Tibial artery (tissue), 4 donors: ENCODE measurements at regions of chr5 and their contacts with region 1.

Region 1: DNA sequence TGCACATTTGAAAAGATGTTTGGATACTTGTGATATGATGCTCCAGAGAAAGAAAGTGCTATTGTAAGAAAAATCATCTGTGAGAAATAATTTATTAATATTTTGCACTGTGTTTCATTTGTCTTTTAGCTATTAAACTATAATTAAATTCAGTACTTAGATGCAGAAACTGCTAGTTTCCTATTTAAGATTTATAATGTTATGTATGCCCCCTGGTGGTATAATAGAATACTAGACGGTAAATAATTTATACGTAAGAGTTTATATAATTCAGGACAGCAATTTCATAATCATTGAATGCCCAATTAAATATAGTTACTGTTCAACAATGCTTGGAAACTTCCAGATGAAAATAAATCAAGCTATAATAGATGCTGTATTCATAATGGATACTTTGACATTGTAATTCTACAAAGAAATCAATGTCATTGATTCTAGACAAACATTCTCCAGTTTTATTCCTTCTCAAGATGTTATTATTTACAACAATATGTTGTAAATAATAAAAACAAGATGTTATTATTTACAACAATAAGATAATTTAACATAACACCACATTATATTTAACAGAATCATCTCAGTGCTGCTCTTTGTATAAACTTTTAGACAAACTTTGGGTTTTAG is 101.0 kb downstream of the TMEM232 start:
- DNase-seq: no peak
- H3K4me3 ChIP-seq: no peak overlapping the region
- H3K27ac ChIP-seq: no peak overlapping the region
- H3K4me1 ChIP-seq: peaks cover 0 to 4% (median 0%) of the 10 kb centered on the region in 4 donors
- H3K27me3 ChIP-seq: no peaks in the 10 kb centered on the region
- CTCF ChIP-seq: peak; percentile 45 to 54

Region 2: GRCh38 chr5:109703829-109704228 is 921.7 kb before region 1 on chr5:
- intact Hi-C with region 1: loop called (anchors 10 kb)
- DNase-seq: no peak
- H3K4me3 ChIP-seq: no peak overlapping the region
- H3K27ac ChIP-seq: peak overlapping the region; percentile 23 to 68
- H3K4me1 ChIP-seq: peaks cover 0 to 51% (median 22%) of the 10 kb centered on the region in 4 donors
- H3K27me3 ChIP-seq: no peaks in the 10 kb centered on the region
- CTCF ChIP-seq: no peak

Region 3: GRCh38 chr5:110463106-110463505 is 162.4 kb before region 1 on chr5:
- intact Hi-C with region 1: no loop called
- DNase-seq: no peak
- H3K4me3 ChIP-seq: no peak overlapping the region
- H3K27ac ChIP-seq: no peak overlapping the region
- H3K4me1 ChIP-seq: no peaks in the 10 kb centered on the region
- H3K27me3 ChIP-seq: no peaks in the 10 kb centered on the region
- CTCF ChIP-seq: no peak

Region 4: GRCh38 chr5:110681109-110681508 is 55.6 kb after region 1 on chr5:
- intact Hi-C with region 1: no loop called
- DNase-seq: no peak
- H3K4me3 ChIP-seq: no peak overlapping the region
- H3K27ac ChIP-seq: no peak overlapping the region
- H3K4me1 ChIP-seq: no peaks in the 10 kb centered on the region
- H3K27me3 ChIP-seq: no peaks in the 10 kb centered on the region
- CTCF ChIP-seq: no peak